Right lobe of liver (tissue), 6 donors: ENCODE measurements at regions of chr1 and their contacts with region 1.

Region 1: DNA sequence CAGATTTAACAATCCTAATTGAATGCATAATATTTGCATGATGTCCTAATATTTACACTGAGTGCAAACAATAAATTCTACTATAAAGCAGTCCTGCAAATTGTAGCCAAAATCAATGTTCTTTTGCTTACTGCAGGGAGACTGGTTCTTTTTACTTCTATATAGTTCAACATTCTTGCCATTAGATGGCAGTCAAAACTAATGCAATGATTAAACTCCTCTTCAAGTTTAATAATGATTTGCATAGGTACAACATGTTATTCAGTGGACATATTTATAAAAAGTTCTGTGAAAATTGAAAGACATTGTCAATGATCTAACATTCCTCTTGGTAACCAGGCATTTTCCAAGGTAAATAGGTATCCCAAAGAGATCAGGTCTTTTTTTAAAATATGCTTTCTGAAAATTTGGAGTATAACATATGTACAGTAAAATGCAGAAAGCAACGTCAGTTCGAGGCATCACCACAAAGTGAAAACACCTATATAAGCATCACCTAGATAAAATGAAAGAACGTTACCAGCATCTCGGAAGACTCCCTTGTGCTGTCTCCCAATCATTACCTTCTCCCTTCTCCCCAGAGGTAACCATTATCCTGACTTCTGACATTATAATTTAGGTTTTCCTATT is 9.8 kb upstream of the FNBP1L start:
- DNase-seq: no peak
- ATAC-seq: peak; percentile 53 to 73 (median 65)
- H3K4me3 ChIP-seq: no peak overlapping the region
- H3K27ac ChIP-seq: no peak overlapping the region
- H3K4me1 ChIP-seq: peaks cover 0 to 11% (median 2%) of the 10 kb centered on the region in 4 donors
- H3K27me3 ChIP-seq: no peaks in the 10 kb centered on the region
- CTCF ChIP-seq: peak; percentile 68 to 77 (median 72)
- POLR2A ChIP-seq: no peak

Region 2: DNA sequence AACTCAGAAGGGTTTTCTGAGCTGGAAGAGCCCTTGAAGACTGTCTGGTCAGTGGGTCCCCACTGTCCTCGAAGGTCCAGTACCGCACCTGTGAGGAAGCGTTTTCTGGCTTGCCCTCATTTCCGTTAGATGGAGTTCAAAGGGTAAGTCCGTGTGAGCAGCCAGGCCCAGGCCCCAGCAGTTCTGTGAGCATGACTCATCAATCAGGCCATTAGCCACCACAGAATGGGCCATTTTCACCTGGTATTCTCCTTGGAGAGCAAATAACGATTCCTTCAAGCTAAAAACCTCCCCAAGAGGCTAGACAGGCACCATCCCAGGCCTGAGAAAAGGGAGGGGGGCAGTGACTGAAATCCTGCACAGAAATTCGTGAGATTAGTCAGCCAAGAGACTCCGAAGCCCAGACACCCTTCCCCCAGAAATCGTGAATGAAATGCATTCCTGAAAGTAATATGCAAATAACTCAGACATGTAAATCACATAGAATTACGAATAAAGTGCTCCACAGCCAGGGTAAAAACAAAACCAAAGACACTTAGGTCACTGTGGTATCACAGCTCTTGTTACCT is 177.6 kb after region 1 on chr1:
- intact Hi-C with region 1: loop called in 1 of 2 experiments (anchors 10 kb)
- DNase-seq: peak in 1 of 3 donors; percentile 47
- ATAC-seq: peak in 3 of 4 donors; percentile 5 to 42 (median 17)
- H3K4me3 ChIP-seq: no peak overlapping the region
- H3K27ac ChIP-seq: peak overlapping the region; percentile 45 to 95 (median 61)
- H3K4me1 ChIP-seq: peaks cover 0 to 68% (median 26%) of the 10 kb centered on the region in 4 donors
- H3K27me3 ChIP-seq: no peaks in the 10 kb centered on the region
- CTCF ChIP-seq: no peak
- POLR2A ChIP-seq: peak; percentile 12

Region 3: DNA sequence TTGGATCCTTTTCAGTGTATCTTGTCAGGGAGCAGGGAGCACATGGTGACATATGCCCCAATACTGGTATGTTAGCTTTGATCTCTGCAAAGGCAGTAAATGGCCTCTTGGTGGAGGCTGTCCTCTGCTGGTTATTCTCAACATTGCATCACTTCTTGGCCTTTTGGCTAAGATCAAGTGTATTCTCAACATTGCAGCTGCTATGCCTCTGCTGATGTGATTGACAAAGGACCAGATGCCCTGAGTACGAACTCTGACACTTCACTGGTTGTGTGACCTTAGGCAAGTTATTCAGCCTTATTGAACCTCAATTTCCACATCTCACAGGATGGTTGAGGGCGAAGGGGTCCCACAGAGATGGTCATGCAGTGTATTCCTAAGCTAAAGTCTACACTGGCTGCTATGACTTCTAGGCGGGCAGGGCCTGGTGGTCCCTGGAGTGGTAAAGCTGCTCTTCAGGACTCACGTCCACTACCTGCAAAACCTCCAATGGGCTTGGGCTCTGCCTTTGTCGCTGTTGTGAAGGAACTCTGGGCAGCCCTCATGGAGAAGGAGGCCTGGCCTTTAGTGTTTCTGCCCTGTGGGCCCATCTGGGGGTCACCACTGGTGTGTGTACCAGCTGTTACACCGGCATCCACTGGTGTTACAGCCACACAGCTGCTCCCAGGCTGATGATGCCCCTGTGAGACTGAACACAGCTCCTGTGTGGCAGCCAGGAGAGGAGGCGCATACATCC is 376.1 kb after region 1 on chr1:
- intact Hi-C with region 1: loop called in 1 of 2 experiments (anchors 10 kb)
- DNase-seq: peak in 1 of 3 donors; percentile 63
- ATAC-seq: peak; percentile 90 to 91 (median 91)
- H3K4me3 ChIP-seq: no peak overlapping the region
- H3K27ac ChIP-seq: no peak overlapping the region
- H3K4me1 ChIP-seq: no peaks in the 10 kb centered on the region
- H3K27me3 ChIP-seq: no peaks in the 10 kb centered on the region
- CTCF ChIP-seq: peak; percentile 95 to 99 (median 98)
- POLR2A ChIP-seq: no peak